BJ (cell line): ENCODE measurements at regions of chrX and their contacts with region 1.

Region 1: GRCh38 chrX:153507484-153508178 is 9.8 kb upstream of the ATP2B3 start:
- DNase-seq: no peak
- H3K4me3 ChIP-seq: no peak overlapping the region
- H3K27me3 ChIP-seq: no peaks in the 10 kb centered on the region
- CTCF ChIP-seq: peak; percentile 74

Region 2: DNA sequence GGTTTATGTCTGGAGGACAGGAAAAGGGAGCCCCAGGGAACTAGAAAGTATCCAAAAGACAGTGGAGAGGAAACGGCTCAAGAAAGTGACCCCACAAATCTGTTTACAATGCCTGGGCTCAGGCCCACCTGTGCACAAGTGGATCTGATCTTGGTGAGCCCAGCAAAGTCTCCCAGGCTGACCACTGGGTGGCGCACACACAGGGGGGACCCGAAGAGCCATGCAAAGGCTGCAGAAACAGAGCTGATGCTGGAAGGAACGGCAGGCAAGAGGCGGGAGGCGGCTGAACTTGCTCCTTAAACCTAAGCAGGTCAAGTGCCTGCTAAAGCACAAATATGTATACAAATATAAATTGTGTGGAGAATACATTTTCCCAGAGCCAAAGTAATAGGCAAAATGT is 46.8 kb before region 1 on chrX:
- CTCF ChIA-PET with region 1: interaction called, 19 read pairs
- POLR2A ChIA-PET with region 1: no interaction called
- DNase-seq: no peak
- H3K4me3 ChIP-seq: no peak overlapping the region
- H3K27me3 ChIP-seq: no peaks in the 10 kb centered on the region
- CTCF ChIP-seq: peak; percentile 70

Region 3: DNA sequence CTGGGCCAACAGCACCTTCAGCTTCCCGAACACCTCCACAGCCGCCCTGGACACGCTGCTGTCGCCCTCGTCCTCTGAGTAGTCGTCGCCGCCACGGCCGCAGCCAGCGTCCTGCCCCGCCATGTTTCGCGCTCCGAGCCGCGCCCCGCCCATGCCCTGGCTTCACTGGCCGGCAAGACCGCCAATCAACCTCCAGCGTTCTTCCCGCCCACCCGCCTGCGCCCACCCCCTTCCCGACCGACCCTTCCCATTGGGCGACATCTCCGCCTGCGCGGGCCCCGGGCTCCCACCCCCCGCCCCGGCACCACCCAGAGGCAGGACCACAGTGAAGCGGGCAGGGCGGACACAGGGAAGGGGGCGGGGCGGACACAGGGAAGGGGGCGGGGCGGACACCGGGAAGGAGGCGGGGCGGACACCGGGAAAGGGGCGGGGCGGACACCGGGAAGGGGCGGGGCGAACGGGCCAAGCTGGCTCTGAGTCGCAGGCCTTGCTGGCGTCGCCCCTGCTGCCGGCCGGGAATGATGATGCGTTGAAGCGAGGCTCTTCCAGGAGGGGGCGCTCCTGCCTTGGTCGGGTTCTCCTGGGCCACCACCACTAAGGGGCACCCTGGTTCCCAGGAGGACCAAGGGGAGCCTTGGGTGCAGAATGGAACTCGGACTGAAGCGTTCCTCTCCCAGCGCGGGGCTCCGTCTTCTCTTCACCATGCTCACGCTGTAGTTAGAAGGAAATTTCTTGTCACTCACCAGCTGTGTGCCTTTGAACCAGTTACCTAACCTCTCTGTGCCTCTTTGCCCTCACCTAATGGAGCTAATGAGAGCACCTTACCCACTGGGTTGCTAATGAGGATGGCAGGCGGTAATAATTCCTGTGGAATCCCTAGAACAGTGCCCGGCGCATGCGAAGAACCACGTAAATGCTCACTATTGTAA is 36.9 kb before region 1 on chrX and contains the start of gene HAUS7:
- CTCF ChIA-PET with region 1: interaction called, 132 read pairs
- POLR2A ChIA-PET with region 1: interaction called, 3 read pairs
- DNase-seq: no peak
- H3K4me3 ChIP-seq: peak within 1 kb of the TSS; percentile 60
- H3K27me3 ChIP-seq: no peaks in the 10 kb centered on the region
- CTCF ChIP-seq: peak; percentile 75
- polyA plus RNA-seq, gene HAUS7: 26.8 and 38.4 TPM in 2 replicates

Region 4: DNA sequence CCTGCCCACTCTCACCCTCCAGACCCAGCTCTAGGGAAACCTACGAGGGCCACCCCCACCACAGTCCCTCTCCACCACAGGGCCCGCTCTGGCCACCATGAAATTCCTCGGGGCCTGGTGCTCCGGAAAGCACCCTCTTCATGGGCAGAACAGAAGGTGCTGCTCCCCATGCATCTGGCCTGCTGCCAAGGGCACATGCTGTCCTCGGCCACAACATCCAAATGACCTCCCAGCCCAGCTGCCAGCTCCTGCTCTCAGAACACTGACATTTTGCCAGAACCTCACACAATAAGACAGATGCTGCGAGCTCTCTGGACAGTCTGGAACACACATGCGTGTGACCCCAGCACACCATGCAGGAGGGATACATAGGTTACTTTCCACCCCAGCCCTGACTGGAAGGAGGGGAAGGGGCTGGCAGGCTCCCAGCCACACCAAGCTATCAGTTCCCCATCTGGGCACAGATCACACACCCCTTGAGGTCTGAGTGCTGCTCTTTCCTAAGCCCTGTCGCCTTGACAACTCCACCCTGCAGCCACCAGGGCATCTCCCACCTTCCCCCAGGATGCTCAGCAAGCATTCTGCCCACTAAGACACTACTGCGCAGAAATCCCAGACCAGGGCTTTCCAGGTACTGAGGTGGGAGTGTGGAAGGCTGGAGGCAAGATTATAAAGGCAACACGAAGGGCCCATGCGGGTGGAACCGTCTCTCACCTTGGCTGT is 85.5 kb after region 1 on chrX:
- CTCF ChIA-PET with region 1: no interaction called
- POLR2A ChIA-PET with region 1: no interaction called
- DNase-seq: no peak
- H3K4me3 ChIP-seq: no peak overlapping the region
- H3K27me3 ChIP-seq: no peaks in the 10 kb centered on the region
- CTCF ChIP-seq: no peak